ENCODE measurements at regions of chr9 and their contacts with region 1.

Region 1: DNA sequence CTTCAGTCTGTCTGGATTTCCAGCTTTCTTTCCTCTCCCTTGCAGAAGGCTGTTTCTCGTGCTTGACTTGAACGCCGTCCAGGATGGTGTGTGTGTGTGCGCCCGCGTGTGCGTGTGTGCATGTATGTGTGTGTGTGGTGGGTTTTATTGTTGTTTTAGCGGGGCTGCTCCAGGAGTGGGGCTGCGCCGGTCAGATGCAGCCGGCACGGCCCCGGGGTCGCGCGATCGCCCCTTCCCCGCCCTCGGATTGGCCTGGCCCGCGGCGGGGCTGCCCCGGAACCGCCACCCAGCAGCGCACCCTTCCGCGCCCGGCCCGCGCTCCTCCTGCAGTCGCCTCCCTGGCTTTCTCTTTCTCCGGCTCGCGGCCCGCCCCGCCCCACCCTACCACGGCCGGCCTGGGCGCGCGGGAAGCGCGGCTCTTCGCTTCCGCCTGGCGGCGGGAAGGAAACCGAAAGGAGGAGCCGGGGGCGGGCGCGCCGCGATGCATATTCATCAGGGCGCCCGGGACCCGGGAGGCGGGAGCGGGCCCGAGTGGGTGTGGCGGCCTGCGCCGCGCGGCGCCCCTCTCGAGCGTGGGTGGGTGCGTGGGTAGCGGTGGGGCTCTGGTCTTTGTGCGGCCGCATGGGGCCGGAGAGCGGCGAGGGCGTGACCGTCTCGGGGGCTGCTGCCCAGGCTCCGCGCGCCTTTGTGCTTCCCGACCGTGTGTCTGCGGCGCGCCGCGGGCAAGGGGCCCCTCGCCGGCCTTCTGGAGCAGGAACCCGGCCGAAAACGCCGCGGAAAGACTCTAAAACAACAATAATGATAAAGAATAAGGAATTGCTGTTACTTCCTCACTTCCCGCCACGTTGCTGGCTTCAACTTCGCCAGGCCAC is 8.5 kb upstream of the NFIB start:
- DNase-seq: peak; percentile 93
- H3K4me3 ChIP-seq: peak overlapping the region; percentile 60
- H3K27ac ChIP-seq: peak overlapping the region; percentile 96
- H3K4me1 ChIP-seq: peaks cover 43% of the 10 kb centered on the region
- H3K27me3 ChIP-seq: no peaks in the 10 kb centered on the region
- CTCF ChIP-seq: no peak

Region 2: GRCh38 chr9:13410566-13411031 is 911.8 kb before region 1 on chr9:
- CTCF ChIA-PET with region 1: no interaction called
- POLR2A ChIA-PET with region 1: interaction called, 16 read pairs
- intact Hi-C with region 1: no loop called
- DNase-seq: no peak
- H3K4me3 ChIP-seq: no peak overlapping the region
- H3K27ac ChIP-seq: no peak overlapping the region
- H3K4me1 ChIP-seq: no peaks in the 10 kb centered on the region
- H3K27me3 ChIP-seq: no peaks in the 10 kb centered on the region
- CTCF ChIP-seq: no peak

Region 3: GRCh38 chr9:13979941-13980318 is 342.5 kb before region 1 on chr9:
- CTCF ChIA-PET with region 1: no interaction called
- POLR2A ChIA-PET with region 1: no interaction called
- intact Hi-C with region 1: no loop called
- DNase-seq: no peak
- H3K4me3 ChIP-seq: no peak overlapping the region
- H3K27ac ChIP-seq: no peak overlapping the region
- H3K4me1 ChIP-seq: no peaks in the 10 kb centered on the region
- H3K27me3 ChIP-seq: no peaks in the 10 kb centered on the region
- CTCF ChIP-seq: no peak

Region 4: DNA sequence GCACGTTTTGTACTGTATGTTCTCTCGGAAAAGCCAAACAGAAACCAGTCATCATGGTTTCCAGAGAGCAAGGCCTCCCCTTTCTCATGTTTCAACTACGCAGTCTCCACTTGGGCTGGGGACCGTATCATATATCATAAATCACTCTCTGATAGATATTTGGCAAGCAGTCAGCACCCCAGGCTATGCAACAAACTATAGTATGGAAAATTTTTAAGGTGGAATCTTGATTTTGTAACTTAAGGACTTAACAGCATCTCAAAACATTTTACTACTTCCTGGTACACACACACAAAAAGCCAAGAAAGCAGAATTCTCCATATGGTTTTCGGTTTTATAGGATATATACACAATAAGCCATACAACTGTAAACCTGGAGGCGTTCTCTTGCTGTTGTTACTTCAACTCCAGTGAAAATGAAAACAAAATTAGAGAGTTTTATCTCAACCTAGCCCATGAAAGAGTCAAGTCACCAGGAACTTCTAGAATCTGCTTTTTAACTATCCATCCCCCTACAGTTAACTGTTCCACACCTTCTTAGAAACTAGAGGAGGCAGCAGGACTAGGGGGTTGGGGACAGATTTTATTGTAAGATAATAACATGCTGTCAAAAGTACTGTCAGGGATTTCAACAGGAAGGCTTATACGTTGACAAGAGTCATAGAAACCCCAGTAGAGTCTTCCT is 291.9 kb before region 1 on chr9:
- CTCF ChIA-PET with region 1: no interaction called
- POLR2A ChIA-PET with region 1: no interaction called
- intact Hi-C with region 1: loop called (anchors 5 kb)
- DNase-seq: peak; percentile 87
- H3K4me3 ChIP-seq: peak overlapping the region; percentile 31
- H3K27ac ChIP-seq: peak overlapping the region; percentile 89
- H3K4me1 ChIP-seq: peaks cover 45% of the 10 kb centered on the region
- H3K27me3 ChIP-seq: no peaks in the 10 kb centered on the region
- CTCF ChIP-seq: no peak

Region 5: GRCh38 chr9:14096258-14096922 is 226.1 kb before region 1 on chr9:
- CTCF ChIA-PET with region 1: no interaction called
- POLR2A ChIA-PET with region 1: no interaction called
- intact Hi-C with region 1: loop called (anchors 5 kb)
- DNase-seq: peak; percentile 90
- H3K4me3 ChIP-seq: peak overlapping the region; percentile 25
- H3K27ac ChIP-seq: peak overlapping the region; percentile 95
- H3K4me1 ChIP-seq: peaks cover 47% of the 10 kb centered on the region
- H3K27me3 ChIP-seq: no peaks in the 10 kb centered on the region
- CTCF ChIP-seq: no peak

Region 6: GRCh38 chr9:14353222-14354056 is 31.0 kb after region 1 on chr9:
- CTCF ChIA-PET with region 1: interaction called, 11 read pairs
- POLR2A ChIA-PET with region 1: no interaction called
- intact Hi-C with region 1: no loop called
- DNase-seq: peak; percentile 79
- H3K4me3 ChIP-seq: no peak overlapping the region
- H3K27ac ChIP-seq: no peak overlapping the region
- H3K4me1 ChIP-seq: no peaks in the 10 kb centered on the region
- H3K27me3 ChIP-seq: no peaks in the 10 kb centered on the region
- CTCF ChIP-seq: peak; percentile 80

Region 7: DNA sequence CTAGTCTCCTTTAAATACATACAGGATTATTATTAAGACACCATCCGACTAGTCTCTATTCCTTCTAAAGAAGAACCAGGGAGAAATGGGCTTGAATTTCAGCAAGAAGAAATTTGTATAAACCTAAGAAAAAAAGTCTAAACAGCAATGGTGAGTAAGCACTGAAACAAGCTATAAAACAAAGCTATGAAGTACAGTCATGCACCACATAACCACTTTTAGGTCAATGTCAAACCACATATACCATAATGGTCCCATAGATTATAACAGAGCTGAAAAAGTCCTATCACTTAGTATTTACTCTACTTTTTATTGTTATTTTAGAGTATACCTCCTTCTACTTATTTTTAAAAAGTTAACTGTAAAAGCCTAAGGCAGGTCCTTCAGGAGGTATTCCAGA is 93.5 kb after region 1 on chr9:
- CTCF ChIA-PET with region 1: no interaction called
- POLR2A ChIA-PET with region 1: no interaction called
- intact Hi-C with region 1: loop called (anchors 5 kb)
- DNase-seq: no peak
- H3K4me3 ChIP-seq: no peak overlapping the region
- H3K27ac ChIP-seq: no peak overlapping the region
- H3K4me1 ChIP-seq: peaks cover 27% of the 10 kb centered on the region
- H3K27me3 ChIP-seq: no peaks in the 10 kb centered on the region
- CTCF ChIP-seq: no peak

Measured in A673 (cell line).